A549 (cell line): ENCODE measurements at regions of chr6 and their contacts with region 1.

Region 1: GRCh38 chr6:125995972-125996580 is 9.7 kb downstream of the TRMT11 start:
- DNase-seq: peak; percentile 44 to 63
- ATAC-seq: peak; percentile 94
- H3K4me3 ChIP-seq: no peak overlapping the region
- H3K27ac ChIP-seq: no peak overlapping the region
- H3K4me1 ChIP-seq: peaks cover 7% of the 10 kb centered on the region; the same call in 1 of the 3 replicates
- CTCF ChIP-seq: peak; percentile 81
- EP300 ChIP-seq: no peak
- POLR2A ChIP-seq: no peak
- RAD21 ChIP-seq: peak; percentile 79 to 87

Region 2: DNA sequence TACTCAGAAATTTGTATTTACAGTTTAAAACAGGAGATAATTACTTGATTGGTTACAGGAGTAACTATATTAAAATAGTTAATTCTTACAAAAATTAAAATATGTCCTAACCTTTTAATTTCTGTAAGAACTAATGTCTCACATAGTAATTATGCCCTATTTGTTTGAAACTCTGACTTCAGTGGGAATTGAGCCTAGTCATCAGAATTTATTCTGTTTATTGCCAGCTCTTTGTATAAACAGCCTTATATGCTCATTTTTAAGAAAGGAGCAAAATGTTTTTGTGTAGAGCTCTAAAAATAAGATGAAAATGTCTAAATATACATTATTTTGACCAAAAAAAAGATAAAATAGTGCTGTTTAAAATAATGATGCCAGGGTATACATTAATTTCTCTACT is 11.7 kb after region 1 on chr6:
- CTCF ChIA-PET with region 1: interaction called, 18 read pairs
- POLR2A ChIA-PET with region 1: no interaction called
- DNase-seq: no peak
- ATAC-seq: no peak
- H3K4me3 ChIP-seq: no peak overlapping the region
- H3K27ac ChIP-seq: no peak overlapping the region
- H3K4me1 ChIP-seq: peaks cover under 1% of the 10 kb centered on the region; the same call in 1 of the 3 replicates
- CTCF ChIP-seq: no peak
- EP300 ChIP-seq: no peak
- POLR2A ChIP-seq: no peak
- RAD21 ChIP-seq: no peak